ENCODE measurements at regions of chr14 and their contacts with region 1.

Region 1: DNA sequence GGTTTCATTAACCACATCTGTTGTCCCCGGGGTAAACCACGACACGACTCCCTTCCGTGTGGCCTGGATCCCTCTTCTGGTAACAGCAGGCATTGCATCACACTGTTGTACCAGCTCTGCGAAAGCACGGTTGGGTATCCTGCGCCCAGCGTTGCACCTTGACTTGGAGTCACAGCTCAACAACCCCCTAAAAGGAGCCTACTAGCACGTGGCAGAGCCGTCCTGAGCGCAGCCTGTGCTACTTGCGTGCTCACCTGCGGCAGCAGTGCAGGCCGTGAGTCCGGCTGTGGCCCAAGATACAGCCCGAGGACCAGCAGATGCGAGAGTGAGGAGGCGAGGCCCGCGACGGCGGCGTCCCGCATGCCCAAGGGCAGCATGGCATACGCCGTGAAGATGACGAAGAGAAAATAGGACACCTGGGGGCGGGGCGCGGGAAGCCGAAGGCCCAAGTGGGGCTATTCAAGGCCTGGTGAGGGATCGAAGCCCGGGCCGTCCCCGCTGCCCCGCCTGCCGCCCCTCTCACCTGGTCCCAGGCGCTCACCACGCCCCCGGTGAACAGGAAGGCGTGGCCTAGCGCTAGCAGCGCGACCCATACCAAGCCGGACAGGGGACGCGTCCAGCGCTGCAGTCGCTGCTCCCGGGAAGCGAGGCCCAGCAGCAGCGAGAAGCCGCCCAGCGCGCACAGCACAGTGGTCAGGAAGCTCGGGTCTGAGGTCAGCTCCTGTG is 2.4 kb downstream of the ADCY4 start:
- DNase-seq: peak; percentile 74 to 95 (median 84)
- ATAC-seq: peak; percentile 87
- H3K4me3 ChIP-seq: peak overlapping the region; percentile 43 to 48
- H3K4me3 Mint-ChIP-seq: peak overlapping the region; percentile 88
- H3K27ac ChIP-seq: no peak overlapping the region
- H3K27ac Mint-ChIP-seq: peak overlapping the region; percentile 70
- H3K4me1 ChIP-seq: peaks cover 60% of the 10 kb centered on the region
- H3K4me1 Mint-ChIP-seq: peaks cover 66% of the 10 kb centered on the region
- H3K27me3 ChIP-seq: peaks cover 7 to 23% of the 10 kb centered on the region in 2 experiments
- H3K27me3 Mint-ChIP-seq: peaks cover 26% of the 10 kb centered on the region
- CTCF ChIP-seq: peak; percentile 76

Region 2: DNA sequence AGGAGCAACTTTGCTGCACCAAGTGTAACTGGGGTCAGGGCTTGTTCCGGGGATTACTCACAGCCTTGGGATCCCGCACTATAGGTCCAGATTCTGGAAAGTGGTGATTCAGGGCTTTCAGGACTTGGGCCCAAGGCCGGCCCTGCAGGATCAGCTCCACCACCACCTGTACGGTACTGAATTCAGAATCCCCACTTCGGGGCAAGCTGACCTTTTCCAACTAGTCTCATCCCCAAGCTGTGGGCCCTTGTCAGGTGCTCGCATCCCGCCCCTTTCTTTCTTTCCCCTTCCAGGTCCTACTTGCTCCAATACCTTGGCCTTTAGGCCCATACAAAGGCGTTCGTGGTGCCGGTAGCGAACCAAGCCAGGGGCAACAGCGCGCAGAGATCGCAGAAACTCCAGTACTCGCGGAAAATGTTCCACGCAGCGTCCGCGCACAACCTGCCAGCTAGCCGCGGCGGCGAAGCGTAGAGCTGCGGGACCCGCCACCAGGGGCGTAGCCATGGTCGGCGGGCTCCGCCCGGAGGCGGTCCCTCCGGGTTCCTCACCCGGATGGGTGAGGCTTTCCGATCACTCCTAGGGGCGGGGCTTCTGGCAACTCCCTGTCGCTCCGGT is 90.5 kb before region 1 on chr14:
- CTCF ChIA-PET with region 1: interaction called, 28 read pairs
- POLR2A ChIA-PET with region 1: interaction called, 8 read pairs
- intact Hi-C with region 1: loop called in 1 of 2 experiments (anchors 1 kb)
- DNase-seq: peak; percentile 84 to 97 (median 94)
- ATAC-seq: peak; percentile 83
- H3K4me3 ChIP-seq: peak overlapping the region; percentile 75 to 83
- H3K4me3 Mint-ChIP-seq: peak overlapping the region; percentile 99
- H3K27ac ChIP-seq: peak overlapping the region; percentile 98
- H3K27ac Mint-ChIP-seq: peak overlapping the region; percentile 100
- H3K4me1 ChIP-seq: peaks cover 41% of the 10 kb centered on the region
- H3K4me1 Mint-ChIP-seq: peaks cover 58% of the 10 kb centered on the region
- H3K27me3 ChIP-seq: no peaks in the 10 kb centered on the region
- H3K27me3 Mint-ChIP-seq: no peaks in the 10 kb centered on the region
- CTCF ChIP-seq: peak; percentile 48

Region 3: DNA sequence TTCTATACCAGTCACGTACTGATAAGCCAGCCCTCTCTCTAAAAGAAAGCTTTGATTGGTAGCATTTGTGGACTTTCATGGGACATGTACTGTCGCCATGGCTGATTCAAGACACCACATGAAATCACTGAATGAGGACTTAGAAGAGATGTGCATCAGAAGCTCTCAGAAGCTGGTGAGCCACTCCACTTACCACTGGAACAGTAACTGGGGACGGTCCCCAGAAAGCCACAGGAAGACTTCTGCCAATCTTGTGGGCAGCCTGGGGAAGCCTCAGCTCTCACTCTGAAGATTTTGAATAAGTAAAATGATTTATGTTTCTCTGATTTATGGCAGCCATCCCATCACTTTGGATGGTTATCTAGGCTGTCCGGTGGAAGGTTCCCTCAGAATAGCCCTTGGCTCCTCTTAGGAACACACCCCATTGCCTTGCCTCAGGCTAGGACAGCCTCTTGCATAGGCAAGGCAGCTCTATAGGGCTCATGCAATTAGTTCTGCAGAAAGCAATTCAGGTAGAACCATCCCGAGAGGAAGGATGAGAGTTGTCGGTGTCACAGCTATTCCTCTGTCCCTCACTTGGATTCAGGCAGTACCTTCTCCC is 42.7 kb before region 1 on chr14:
- CTCF ChIA-PET with region 1: no interaction called
- POLR2A ChIA-PET with region 1: no interaction called
- intact Hi-C with region 1: no loop called
- DNase-seq: peak in 4 of 9 experiments; percentile 3 to 65 (median 20)
- ATAC-seq: peak; percentile 31
- H3K4me3 ChIP-seq: no peak overlapping the region
- H3K4me3 Mint-ChIP-seq: no peak overlapping the region
- H3K27ac ChIP-seq: no peak overlapping the region
- H3K27ac Mint-ChIP-seq: no peak overlapping the region
- H3K4me1 ChIP-seq: peaks cover 10% of the 10 kb centered on the region
- H3K4me1 Mint-ChIP-seq: peaks cover 2% of the 10 kb centered on the region
- H3K27me3 ChIP-seq: no peaks in the 10 kb centered on the region
- H3K27me3 Mint-ChIP-seq: no peaks in the 10 kb centered on the region
- CTCF ChIP-seq: no peak

Region 4: DNA sequence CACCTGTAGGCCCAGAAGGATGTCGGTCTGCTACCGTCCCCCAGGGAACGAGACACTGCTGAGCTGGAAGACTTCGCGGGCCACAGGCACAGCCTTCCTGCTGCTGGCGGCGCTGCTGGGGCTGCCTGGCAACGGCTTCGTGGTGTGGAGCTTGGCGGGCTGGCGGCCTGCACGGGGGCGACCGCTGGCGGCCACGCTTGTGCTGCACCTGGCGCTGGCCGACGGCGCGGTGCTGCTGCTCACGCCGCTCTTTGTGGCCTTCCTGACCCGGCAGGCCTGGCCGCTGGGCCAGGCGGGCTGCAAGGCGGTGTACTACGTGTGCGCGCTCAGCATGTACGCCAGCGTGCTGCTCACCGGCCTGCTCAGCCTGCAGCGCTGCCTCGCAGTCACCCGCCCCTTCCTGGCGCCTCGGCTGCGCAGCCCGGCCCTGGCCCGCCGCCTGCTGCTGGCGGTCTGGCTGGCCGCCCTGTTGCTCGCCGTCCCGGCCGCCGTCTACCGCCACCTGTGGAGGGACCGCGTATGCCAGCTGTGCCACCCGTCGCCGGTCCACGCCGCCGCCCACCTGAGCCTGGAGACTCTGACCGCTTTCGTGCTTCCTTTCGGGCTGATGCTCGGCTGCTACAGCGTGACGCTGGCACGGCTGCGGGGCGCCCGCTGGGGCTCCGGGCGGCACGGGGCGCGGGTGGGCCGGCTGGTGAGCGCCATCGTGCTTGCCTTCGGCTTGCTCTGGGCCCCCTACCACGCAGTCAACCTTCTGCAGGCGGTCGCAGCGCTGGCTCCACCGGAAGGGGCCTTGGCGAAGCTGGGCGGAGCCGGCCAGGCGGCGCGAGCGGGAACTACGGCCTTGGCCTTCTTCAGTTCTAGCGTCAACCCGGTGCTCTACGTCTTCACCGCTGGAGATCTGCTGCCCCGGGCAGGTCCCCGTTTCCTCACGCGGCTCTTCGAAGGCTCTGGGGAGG is 21.5 kb before region 1 on chr14 and contains the start of gene LTB4R:
- CTCF ChIA-PET with region 1: interaction called, 192 read pairs
- POLR2A ChIA-PET with region 1: interaction called, 5 read pairs
- intact Hi-C with region 1: loop called (anchors 1 to 2 kb)
- DNase-seq: peak; percentile 41 to 89 (median 68)
- ATAC-seq: peak; percentile 80
- H3K4me3 ChIP-seq: peak within 1 kb of the TSS; percentile 52 to 57
- H3K4me3 Mint-ChIP-seq: peak within 1 kb of the TSS; percentile 75
- H3K27ac ChIP-seq: peak within 1 kb of the TSS; percentile 63 to 78
- H3K27ac Mint-ChIP-seq: peak within 1 kb of the TSS; percentile 90
- H3K4me1 ChIP-seq: peaks cover 62% of the 10 kb centered on the region
- H3K4me1 Mint-ChIP-seq: peaks cover 72% of the 10 kb centered on the region
- H3K27me3 ChIP-seq: no peaks in the 10 kb centered on the region
- H3K27me3 Mint-ChIP-seq: no peaks in the 10 kb centered on the region
- CTCF ChIP-seq: no peak
- total RNA-seq, gene LTB4R: 15.4 to 16.7 TPM

Region 5: GRCh38 chr14:24356208-24356607 is 23.8 kb after region 1 on chr14:
- CTCF ChIA-PET with region 1: interaction called, 23 read pairs
- POLR2A ChIA-PET with region 1: no interaction called
- intact Hi-C with region 1: no loop called
- DNase-seq: no peak
- ATAC-seq: no peak
- H3K4me3 ChIP-seq: no peak overlapping the region
- H3K4me3 Mint-ChIP-seq: no peak overlapping the region
- H3K27ac ChIP-seq: no peak overlapping the region
- H3K27ac Mint-ChIP-seq: no peak overlapping the region
- H3K4me1 ChIP-seq: no peaks in the 10 kb centered on the region
- H3K4me1 Mint-ChIP-seq: no peaks in the 10 kb centered on the region
- H3K27me3 ChIP-seq: peaks cover 0 to 4% of the 10 kb centered on the region in 2 experiments
- H3K27me3 Mint-ChIP-seq: peaks cover 30% of the 10 kb centered on the region
- CTCF ChIP-seq: no peak

Region 6: GRCh38 chr14:24418492-24418873 is 86.1 kb after region 1 on chr14:
- CTCF ChIA-PET with region 1: interaction called, 29 read pairs
- POLR2A ChIA-PET with region 1: no interaction called
- intact Hi-C with region 1: no loop called
- DNase-seq: peak in 1 of 9 experiments; percentile 1
- ATAC-seq: no peak
- H3K4me3 ChIP-seq: no peak overlapping the region
- H3K4me3 Mint-ChIP-seq: no peak overlapping the region
- H3K27ac ChIP-seq: no peak overlapping the region
- H3K27ac Mint-ChIP-seq: no peak overlapping the region
- H3K4me1 ChIP-seq: no peaks in the 10 kb centered on the region
- H3K4me1 Mint-ChIP-seq: no peaks in the 10 kb centered on the region
- H3K27me3 ChIP-seq: peaks cover 0 to 4% of the 10 kb centered on the region in 2 experiments
- H3K27me3 Mint-ChIP-seq: no peaks in the 10 kb centered on the region
- CTCF ChIP-seq: no peak

Region 7: GRCh38 chr14:24442273-24443052 is 110.0 kb after region 1 on chr14 and contains the start of gene SDR39U1:
- CTCF ChIA-PET with region 1: interaction called, 442 read pairs
- POLR2A ChIA-PET with region 1: interaction called, 25 read pairs
- intact Hi-C with region 1: no loop called
- DNase-seq: peak; percentile 93 to 100 (median 95)
- ATAC-seq: peak; percentile 89
- H3K4me3 ChIP-seq: peak within 1 kb of the TSS; percentile 77 to 89
- H3K4me3 Mint-ChIP-seq: peak within 1 kb of the TSS; percentile 95
- H3K27ac ChIP-seq: peak within 1 kb of the TSS; percentile 96
- H3K27ac Mint-ChIP-seq: peak within 1 kb of the TSS; percentile 97
- H3K4me1 ChIP-seq: peaks cover 35% of the 10 kb centered on the region
- H3K4me1 Mint-ChIP-seq: peaks cover 45% of the 10 kb centered on the region
- H3K27me3 ChIP-seq: no peaks in the 10 kb centered on the region
- H3K27me3 Mint-ChIP-seq: no peaks in the 10 kb centered on the region
- CTCF ChIP-seq: no peak
- total RNA-seq, gene SDR39U1: 75.0 to 84.4 TPM

Region 8: GRCh38 chr14:24535737-24536136 is 203.3 kb after region 1 on chr14:
- CTCF ChIA-PET with region 1: no interaction called
- POLR2A ChIA-PET with region 1: no interaction called
- intact Hi-C with region 1: no loop called
- DNase-seq: peak in 1 of 9 experiments; percentile 12
- ATAC-seq: no peak
- H3K4me3 ChIP-seq: no peak overlapping the region
- H3K4me3 Mint-ChIP-seq: no peak overlapping the region
- H3K27ac ChIP-seq: no peak overlapping the region
- H3K27ac Mint-ChIP-seq: no peak overlapping the region
- H3K4me1 ChIP-seq: no peaks in the 10 kb centered on the region
- H3K4me1 Mint-ChIP-seq: no peaks in the 10 kb centered on the region
- H3K27me3 ChIP-seq: no peaks in the 10 kb centered on the region
- H3K27me3 Mint-ChIP-seq: peaks cover 19% of the 10 kb centered on the region
- CTCF ChIP-seq: no peak

Measured in CD8-positive, alpha-beta T cell (primary cell).